BJ (cell line): ENCODE measurements at regions of chr4 and their contacts with region 1.

Region 1: GRCh38 chr4:56977321-56978012 is at the start of gene NOA1:
- DNase-seq: peak; percentile 97
- H3K4me3 ChIP-seq: peak within 1 kb of the TSS; percentile 86
- H3K27me3 ChIP-seq: no peaks in the 10 kb centered on the region
- CTCF ChIP-seq: no peak; the same call in 1 of the 2 replicates
- polyA plus RNA-seq, gene NOA1: 15.5 and 15.9 TPM in 2 replicates

Region 2: DNA sequence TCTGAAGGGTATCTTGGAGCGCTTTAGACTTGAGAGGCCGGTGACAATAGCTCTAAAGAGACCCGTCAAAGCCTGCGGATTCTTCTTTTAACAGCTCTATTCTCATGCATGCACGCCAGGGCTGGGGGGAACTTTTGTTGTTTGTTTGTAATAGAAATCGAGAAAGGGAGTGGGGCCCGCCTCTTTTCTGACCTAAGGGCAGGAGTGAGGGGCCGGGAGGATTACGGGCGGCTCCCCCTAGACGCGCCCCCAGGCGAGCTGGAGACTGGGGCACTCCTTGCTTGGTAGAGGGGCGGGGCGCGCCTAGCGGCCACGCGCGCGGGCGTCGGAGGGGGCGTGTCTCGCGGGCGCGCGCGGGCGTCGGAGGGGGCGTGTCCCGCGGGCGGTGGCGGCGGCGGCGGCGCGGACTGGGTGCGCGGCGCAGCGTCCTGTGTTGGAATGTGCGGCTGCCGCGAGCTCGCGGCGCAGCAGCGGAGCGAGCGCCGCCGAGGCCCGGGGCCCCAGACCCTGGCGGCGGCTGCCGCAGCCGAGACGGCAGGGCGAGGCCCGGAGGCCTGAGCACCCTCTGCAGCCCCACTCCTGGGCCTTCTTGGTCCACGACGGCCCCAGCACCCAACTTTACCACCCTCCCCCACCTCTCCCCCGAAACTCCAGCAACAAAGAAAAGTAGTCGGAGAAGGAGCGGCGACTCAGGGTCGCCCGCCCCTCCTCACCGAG is 69.8 kb before region 1 on chr4 and contains the start of gene REST:
- CTCF ChIA-PET with region 1: no interaction called
- POLR2A ChIA-PET with region 1: interaction called, 15 read pairs
- DNase-seq: no peak
- H3K4me3 ChIP-seq: peak within 1 kb of the TSS; percentile 76
- H3K27me3 ChIP-seq: peaks cover 6% of the 10 kb centered on the region
- CTCF ChIP-seq: 0 out of 2 replicates have a peak, but pooled peaks have one; percentile 7
- polyA plus RNA-seq, gene REST: 13.2 and 22.1 TPM in 2 replicates

Region 3: DNA sequence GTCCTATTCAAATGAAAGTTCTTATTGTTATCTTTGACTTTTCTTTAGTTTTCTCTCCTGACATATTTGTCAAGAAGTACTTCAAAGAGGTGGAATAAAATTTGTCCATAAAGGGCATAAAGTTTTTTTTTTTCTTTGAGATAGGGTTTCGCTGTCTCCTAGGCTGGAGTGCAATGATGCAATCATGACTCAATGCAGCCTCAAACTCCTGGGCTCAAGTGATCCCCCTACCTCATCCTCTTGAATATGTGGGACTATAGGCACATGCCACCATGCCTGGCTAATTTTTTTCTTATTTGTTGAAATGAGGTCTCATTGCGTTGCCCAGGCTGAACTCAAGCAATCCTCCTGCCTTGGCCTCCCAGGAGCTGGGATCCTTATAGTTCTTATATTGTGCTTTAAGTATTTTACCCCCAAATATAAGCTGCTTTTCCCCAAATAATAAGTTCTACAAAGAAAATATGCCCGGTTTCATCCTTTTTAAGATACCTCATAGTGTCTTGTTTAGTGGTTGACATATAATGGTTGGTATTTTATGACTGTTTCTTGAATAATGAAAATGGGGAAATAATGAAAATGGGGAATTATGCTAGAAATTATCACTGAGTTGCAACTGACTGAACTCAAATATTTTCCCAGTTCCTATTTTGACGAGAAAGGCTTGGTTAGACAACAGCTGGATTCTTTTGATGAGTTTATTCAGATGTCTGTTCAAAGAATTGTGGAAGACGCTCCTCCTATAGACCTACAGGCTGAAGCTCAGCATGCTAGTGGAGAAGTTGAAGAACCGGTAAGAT is 12.8 kb after region 1 on chr4:
- CTCF ChIA-PET with region 1: interaction called, 11 read pairs
- POLR2A ChIA-PET with region 1: no interaction called
- DNase-seq: no peak
- H3K4me3 ChIP-seq: no peak overlapping the region
- H3K27me3 ChIP-seq: no peaks in the 10 kb centered on the region
- CTCF ChIP-seq: no peak